K562 (cell line): ENCODE measurements at regions of chr21 and their contacts with region 1.

Region 1: GRCh38 chr21:42456457-42456856 is 39.6 kb downstream of the RSPH1 start:
- DNase-seq: peak in 1 of 4 experiments; percentile 28
- ATAC-seq: peak; percentile 28
- H3K4me3 ChIP-seq: no peak overlapping the region
- H3K27ac ChIP-seq: no peak overlapping the region
- H3K4me1 ChIP-seq: peaks cover 0 to 5% of the 10 kb centered on the region in 2 experiments; a peak in 1 of 5 replicates
- H3K27me3 ChIP-seq: peaks cover 6 to 49% of the 10 kb centered on the region in 2 experiments; a peak in 4 of 5 replicates
- CTCF ChIP-seq: no peak
- EP300 ChIP-seq: no peak
- POLR2A ChIP-seq: no peak
- RAD21 ChIP-seq: no peak

Region 2: GRCh38 chr21:41916888-41917433 is 539.5 kb before region 1 on chr21:
- CTCF ChIA-PET with region 1: no interaction called
- POLR2A ChIA-PET with region 1: no interaction called
- in situ Hi-C with region 1: no loop called
- intact Hi-C with region 1: no loop called
- DNase-seq: peak in 1 of 4 experiments; percentile 16
- ATAC-seq: peak; percentile 53; the same call in 2 of the 3 replicates
- H3K4me3 ChIP-seq: no peak overlapping the region
- H3K27ac ChIP-seq: no peak overlapping the region
- H3K4me1 ChIP-seq: peaks cover 0 to 3% of the 10 kb centered on the region in 2 experiments; a peak in 1 of 5 replicates
- H3K27me3 ChIP-seq: no peaks in the 10 kb centered on the region
- CTCF ChIP-seq: peak in 2 of 3 experiments; percentile 44 to 57; a peak in 4 of 6 replicates
- EP300 ChIP-seq: no peak
- POLR2A ChIP-seq: no peak
- RAD21 ChIP-seq: peak; percentile 31 to 56; a peak in 3 of 4 replicates

Region 3: GRCh38 chr21:42145569-42146272 is 310.7 kb before region 1 on chr21:
- CTCF ChIA-PET with region 1: no interaction called
- POLR2A ChIA-PET with region 1: no interaction called
- in situ Hi-C with region 1: no loop called
- intact Hi-C with region 1: loop called (anchors 5 kb)
- DNase-seq: peak; percentile 68 to 88 (median 86)
- ATAC-seq: peak; percentile 84
- H3K4me3 ChIP-seq: no peak overlapping the region
- H3K27ac ChIP-seq: no peak overlapping the region
- H3K4me1 ChIP-seq: peaks cover 0 to 8% of the 10 kb centered on the region in 2 experiments; a peak in 2 of 5 replicates
- H3K27me3 ChIP-seq: peaks cover 25 to 65% of the 10 kb centered on the region in 2 experiments; a peak in 4 of 5 replicates
- CTCF ChIP-seq: peak; percentile 88 to 94 (median 93)
- EP300 ChIP-seq: no peak
- POLR2A ChIP-seq: no peak
- RAD21 ChIP-seq: peak; percentile 81 to 92

Region 4: DNA sequence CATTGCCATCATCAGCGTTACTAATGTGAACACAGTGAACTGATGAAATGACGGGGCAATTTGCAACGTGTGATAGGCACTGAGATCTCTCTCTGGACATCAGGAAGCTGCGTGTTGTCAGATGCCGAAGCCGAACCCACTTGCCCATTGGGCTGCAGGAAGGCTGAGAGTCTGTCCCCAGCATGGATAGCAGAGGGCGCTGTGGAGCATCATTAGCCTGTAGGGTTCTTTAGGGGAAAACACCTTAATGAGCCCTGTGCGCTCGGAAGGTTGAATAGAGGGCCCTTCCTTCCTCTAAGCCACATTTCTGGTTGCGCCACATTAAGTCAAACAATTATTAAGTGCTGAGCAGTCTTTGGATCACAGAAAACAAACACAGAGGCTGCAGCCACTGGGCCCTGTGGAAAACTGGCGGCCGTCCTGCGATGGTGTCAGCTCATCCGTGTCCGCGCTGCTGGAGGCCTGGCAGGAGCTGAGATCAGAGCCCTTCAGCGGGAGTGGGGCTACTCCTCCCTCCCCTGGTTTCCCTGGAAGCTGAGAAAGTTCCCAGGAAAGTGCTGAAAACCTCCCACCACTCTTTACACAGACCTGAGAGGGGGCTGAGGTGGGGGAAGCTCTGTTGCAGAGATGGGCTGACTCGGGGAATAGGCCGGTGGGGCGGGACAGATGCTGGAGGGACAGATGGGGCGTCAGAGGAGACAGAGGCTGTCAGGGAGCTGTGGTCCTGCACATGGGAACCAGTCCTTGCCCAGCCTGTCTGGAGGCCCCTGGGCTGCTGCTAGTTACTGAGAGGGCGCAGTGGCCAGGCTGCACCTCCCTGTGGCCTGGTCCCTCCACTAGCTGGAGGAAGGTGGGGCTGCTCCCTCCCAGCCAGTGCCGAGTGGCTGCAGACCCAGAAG is 118.4 kb before region 1 on chr21:
- CTCF ChIA-PET with region 1: no interaction called
- POLR2A ChIA-PET with region 1: no interaction called
- in situ Hi-C with region 1: no loop called
- intact Hi-C with region 1: loop called (anchors 10 kb)
- DNase-seq: peak; percentile 65 to 77 (median 74)
- ATAC-seq: peak; percentile 98
- H3K4me3 ChIP-seq: no peak overlapping the region
- H3K27ac ChIP-seq: no peak overlapping the region
- H3K4me1 ChIP-seq: peaks cover 0 to 7% of the 10 kb centered on the region in 2 experiments; a peak in 1 of 5 replicates
- H3K27me3 ChIP-seq: peaks cover 3 to 37% of the 10 kb centered on the region in 2 experiments; a peak in 4 of 5 replicates
- CTCF ChIP-seq: peak; percentile 87 to 88 (median 88)
- EP300 ChIP-seq: peak; percentile 42; the same call in 1 of the 2 replicates
- POLR2A ChIP-seq: no peak
- RAD21 ChIP-seq: peak; percentile 61 to 77